ENCODE measurements at regions of chr11 and their contacts with region 1.

Region 1: DNA sequence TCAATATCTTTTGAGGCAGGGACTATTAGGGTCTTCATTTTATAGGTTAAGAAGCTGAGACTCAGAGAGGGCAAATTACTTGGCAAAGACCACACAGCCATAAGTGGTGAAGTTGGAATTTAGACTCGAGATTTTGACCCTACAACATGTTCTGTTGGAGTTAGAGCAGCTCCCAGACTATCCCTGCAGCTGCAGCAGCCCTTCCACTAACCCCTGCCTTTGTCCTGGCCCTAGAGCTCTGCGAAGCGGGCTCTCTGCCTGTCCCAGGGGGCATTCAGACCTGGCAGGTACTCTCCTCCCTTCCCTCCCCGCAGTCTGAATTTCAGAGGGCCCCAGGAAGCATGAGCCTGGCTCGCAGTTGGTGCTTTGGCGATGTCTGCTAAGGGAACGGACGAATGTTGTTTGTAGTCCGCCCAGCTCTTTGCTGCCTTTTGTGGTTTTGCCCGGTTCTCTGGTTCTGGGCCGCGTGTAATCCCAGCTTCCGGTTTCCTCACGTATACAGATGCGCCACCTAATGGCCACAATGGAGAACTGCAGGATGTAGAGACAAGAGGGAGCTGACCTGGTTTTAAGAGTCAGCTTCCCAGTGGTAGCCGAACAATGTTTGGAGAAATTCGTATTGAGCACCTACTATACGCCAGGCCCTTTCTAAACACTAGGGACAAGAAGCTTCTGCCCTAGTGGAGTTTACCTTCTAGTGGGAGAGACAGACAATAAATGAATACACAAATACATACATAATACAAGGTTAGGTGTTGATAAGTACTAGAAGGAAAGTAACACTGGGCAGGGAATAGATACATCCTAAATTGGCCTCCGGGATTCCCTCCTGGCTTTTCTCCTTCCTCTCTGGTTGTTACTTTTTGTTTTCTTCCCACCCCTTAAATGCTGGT is 125.2 kb downstream of the ST3GAL4 start:
- DNase-seq: peak; percentile 29 to 87 (median 69)
- ATAC-seq: peak; percentile 95
- H3K4me3 ChIP-seq: peak overlapping the region; percentile 36 to 44
- H3K4me3 Mint-ChIP-seq: peak overlapping the region; percentile 71
- H3K27ac ChIP-seq: peak overlapping the region in 1 of 2 experiments; percentile 49
- H3K27ac Mint-ChIP-seq: no peak overlapping the region
- H3K4me1 ChIP-seq: peaks cover 6% of the 10 kb centered on the region
- H3K4me1 Mint-ChIP-seq: peaks cover 18% of the 10 kb centered on the region
- H3K27me3 ChIP-seq: no peaks in the 10 kb centered on the region
- H3K27me3 Mint-ChIP-seq: no peaks in the 10 kb centered on the region
- CTCF ChIP-seq: peak; percentile 94

Region 2: GRCh38 chr11:126310228-126310991 is 170.2 kb before region 1 on chr11:
- CTCF ChIA-PET with region 1: interaction called, 71 read pairs
- POLR2A ChIA-PET with region 1: no interaction called
- intact Hi-C with region 1: loop called in 1 of 2 experiments (anchors 1 kb)
- DNase-seq: peak in 8 of 9 experiments; percentile 37 to 77 (median 64)
- ATAC-seq: peak; percentile 75
- H3K4me3 ChIP-seq: no peak overlapping the region
- H3K4me3 Mint-ChIP-seq: no peak overlapping the region
- H3K27ac ChIP-seq: no peak overlapping the region
- H3K27ac Mint-ChIP-seq: no peak overlapping the region
- H3K4me1 ChIP-seq: peaks cover 5% of the 10 kb centered on the region
- H3K4me1 Mint-ChIP-seq: peaks cover 30% of the 10 kb centered on the region
- H3K27me3 ChIP-seq: no peaks in the 10 kb centered on the region
- H3K27me3 Mint-ChIP-seq: no peaks in the 10 kb centered on the region
- CTCF ChIP-seq: peak; percentile 60

Region 3: DNA sequence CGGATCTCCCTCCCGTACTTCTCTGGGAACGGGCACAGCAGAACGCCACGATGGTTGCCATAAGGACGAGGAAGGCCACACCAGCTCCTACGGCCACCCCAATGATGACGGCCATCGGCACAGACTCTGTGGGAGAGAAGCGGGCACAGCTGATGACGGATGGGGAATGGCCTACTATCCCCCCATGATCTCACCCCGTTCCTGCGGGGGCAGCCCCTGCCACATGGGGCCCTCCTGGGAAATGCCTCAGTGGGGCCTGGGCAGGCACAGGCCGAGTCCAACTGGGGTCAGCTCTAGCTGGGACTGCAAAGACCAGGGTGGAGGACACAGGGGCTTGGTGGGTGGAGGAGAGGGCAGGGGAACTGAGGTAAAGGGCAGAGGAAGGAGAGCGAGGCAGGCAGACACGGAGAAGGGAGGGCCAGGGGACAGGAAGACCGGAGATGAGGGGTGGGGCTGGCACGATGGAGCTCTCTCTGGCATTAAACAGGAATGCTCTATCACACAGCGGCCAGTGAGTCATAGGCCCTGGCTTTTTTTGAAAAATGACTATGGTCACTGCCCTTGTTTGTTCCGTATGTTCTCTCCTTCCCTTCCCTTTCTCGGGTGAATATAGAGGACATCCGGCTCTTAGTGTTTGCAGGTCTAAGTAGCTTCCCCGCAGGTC is 49.1 kb before region 1 on chr11:
- CTCF ChIA-PET with region 1: interaction called, 29 read pairs
- POLR2A ChIA-PET with region 1: no interaction called
- intact Hi-C with region 1: loop called in 1 of 2 experiments (anchors 10 kb)
- DNase-seq: no peak
- ATAC-seq: no peak
- H3K4me3 ChIP-seq: no peak overlapping the region
- H3K4me3 Mint-ChIP-seq: no peak overlapping the region
- H3K27ac ChIP-seq: no peak overlapping the region
- H3K27ac Mint-ChIP-seq: no peak overlapping the region
- H3K4me1 ChIP-seq: no peaks in the 10 kb centered on the region
- H3K4me1 Mint-ChIP-seq: no peaks in the 10 kb centered on the region
- H3K27me3 ChIP-seq: no peaks in the 10 kb centered on the region
- H3K27me3 Mint-ChIP-seq: no peaks in the 10 kb centered on the region
- CTCF ChIP-seq: no peak

Region 4: GRCh38 chr11:126452241-126453101 is 28.2 kb before region 1 on chr11:
- CTCF ChIA-PET with region 1: interaction called, 10 read pairs
- POLR2A ChIA-PET with region 1: no interaction called
- intact Hi-C with region 1: no loop called
- DNase-seq: no peak
- ATAC-seq: no peak
- H3K4me3 ChIP-seq: no peak overlapping the region
- H3K4me3 Mint-ChIP-seq: no peak overlapping the region
- H3K27ac ChIP-seq: no peak overlapping the region
- H3K27ac Mint-ChIP-seq: no peak overlapping the region
- H3K4me1 ChIP-seq: no peaks in the 10 kb centered on the region
- H3K4me1 Mint-ChIP-seq: no peaks in the 10 kb centered on the region
- H3K27me3 ChIP-seq: no peaks in the 10 kb centered on the region
- H3K27me3 Mint-ChIP-seq: no peaks in the 10 kb centered on the region
- CTCF ChIP-seq: no peak

Region 5: DNA sequence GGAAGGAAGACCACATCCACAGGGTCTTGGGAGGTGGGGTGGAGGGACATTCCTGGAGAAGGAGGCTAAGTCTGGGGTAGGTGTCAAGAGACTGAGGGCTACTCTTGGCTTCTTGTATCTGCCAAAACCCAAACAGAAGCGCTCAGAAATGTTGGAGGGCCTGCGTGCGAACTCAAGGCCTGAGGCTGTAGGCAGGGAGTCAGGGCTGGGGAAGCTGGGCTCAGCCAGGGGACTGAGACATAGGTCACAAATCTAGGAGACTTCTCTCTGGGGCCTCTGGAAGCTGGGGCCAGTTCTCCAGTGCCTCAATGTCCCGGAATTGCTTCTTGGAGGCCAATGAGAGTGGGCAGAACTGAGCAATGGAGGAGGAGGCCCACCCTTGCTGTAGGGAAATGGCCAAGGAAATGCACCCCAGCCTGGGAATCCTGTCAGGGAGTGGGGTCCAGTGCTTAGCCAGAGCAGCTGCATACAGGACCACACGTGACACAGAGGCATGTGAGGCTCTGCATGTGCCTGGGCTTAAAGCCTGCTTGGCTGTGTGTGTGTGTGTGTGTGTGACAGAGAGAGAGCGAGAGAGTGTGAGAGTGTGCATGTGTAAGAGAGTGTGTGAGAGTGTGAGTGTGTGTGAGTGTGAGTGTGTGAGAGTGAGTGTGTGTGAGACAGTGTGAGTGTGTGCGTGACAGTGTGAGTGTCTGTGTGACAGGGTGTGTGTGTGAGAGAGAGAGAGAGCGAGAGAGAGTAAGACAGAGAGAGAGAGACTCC is 16.1 kb after region 1 on chr11:
- CTCF ChIA-PET with region 1: interaction called, 10 read pairs
- POLR2A ChIA-PET with region 1: no interaction called
- intact Hi-C with region 1: no loop called
- DNase-seq: no peak
- ATAC-seq: no peak
- H3K4me3 ChIP-seq: no peak overlapping the region
- H3K4me3 Mint-ChIP-seq: no peak overlapping the region
- H3K27ac ChIP-seq: no peak overlapping the region
- H3K27ac Mint-ChIP-seq: no peak overlapping the region
- H3K4me1 ChIP-seq: no peaks in the 10 kb centered on the region
- H3K4me1 Mint-ChIP-seq: no peaks in the 10 kb centered on the region
- H3K27me3 ChIP-seq: no peaks in the 10 kb centered on the region
- H3K27me3 Mint-ChIP-seq: peaks cover 24% of the 10 kb centered on the region
- CTCF ChIP-seq: no peak